MCF 10A (cell line): ENCODE measurements at regions of chr1 and their contacts with region 1.

Region 1: DNA sequence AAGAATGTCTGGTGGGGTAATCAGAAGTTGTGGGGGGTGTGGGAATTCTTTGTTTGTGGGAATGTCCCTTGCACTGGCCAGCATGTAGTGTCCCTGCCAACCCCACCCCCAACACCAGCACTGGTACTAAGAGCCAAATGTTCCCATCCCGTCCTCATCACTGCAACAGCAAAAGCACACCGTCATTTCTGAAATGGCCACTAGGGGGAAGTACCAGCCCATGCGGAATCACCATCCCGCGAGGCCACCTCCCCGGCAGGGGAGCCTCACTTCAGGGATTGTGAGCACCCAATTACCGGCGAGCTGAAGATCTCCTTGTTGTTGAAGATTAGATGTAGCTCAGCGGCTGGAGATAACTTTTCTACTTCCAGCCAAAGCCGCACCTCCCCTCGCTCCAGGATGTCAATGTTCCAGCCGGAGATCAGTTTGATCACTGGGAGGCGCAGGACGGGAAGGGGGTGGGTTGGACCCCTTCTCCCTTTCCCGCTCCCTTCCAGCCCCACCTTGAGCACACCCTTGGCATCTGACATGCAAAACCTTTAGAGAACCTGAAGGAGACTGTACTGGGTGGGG is 41.0 kb downstream of the MYOM3 start:
- DNase-seq: peak; percentile 84
- H3K4me3 Mint-ChIP-seq: no peak overlapping the region
- H3K27ac Mint-ChIP-seq: no peak overlapping the region
- H3K4me1 Mint-ChIP-seq: peaks cover 3% of the 10 kb centered on the region
- H3K27me3 Mint-ChIP-seq: no peaks in the 10 kb centered on the region
- CTCF ChIP-seq: peak; percentile 88

Region 2: DNA sequence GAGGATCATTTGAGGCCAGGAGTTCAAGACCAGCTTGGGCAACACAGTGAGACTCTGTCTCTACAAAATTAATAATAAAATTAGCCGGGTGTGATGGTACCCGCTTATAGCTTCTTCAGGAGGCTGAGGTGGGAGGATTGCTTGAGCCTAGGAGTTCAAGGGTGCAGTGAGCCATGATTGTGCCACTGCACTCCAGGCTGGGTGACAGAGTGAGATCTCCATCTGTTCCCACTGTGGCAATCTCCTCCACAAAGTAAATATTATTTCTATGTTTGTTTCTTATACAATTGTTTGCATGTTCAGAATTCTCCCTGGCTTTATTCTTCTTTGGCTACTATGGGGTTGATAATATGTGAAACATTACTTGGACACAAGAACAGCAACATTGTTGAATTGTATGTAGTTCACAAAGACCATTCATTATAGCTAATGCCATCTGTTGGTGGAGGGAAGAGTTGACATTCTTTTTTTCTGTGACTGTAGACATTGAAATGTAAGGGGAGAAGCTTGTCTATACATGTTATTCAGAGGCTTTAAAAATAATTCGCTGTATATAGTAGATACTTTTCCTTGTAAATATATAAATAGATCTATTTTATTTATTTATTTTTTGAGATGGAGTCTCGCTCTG is 43.0 kb before region 1 on chr1:
- CTCF ChIA-PET with region 1: no interaction called
- POLR2A ChIA-PET with region 1: no interaction called
- intact Hi-C with region 1: no loop called
- DNase-seq: peak; percentile 57
- H3K4me3 Mint-ChIP-seq: no peak overlapping the region
- H3K27ac Mint-ChIP-seq: peak overlapping the region; percentile 40
- H3K4me1 Mint-ChIP-seq: peaks cover 6% of the 10 kb centered on the region
- H3K27me3 Mint-ChIP-seq: no peaks in the 10 kb centered on the region
- CTCF ChIP-seq: peak; percentile 49

Region 3: GRCh38 chr1:24060118-24060881 is 10.6 kb before region 1 on chr1:
- CTCF ChIA-PET with region 1: interaction called, 12 read pairs
- POLR2A ChIA-PET with region 1: no interaction called
- intact Hi-C with region 1: no loop called
- DNase-seq: no peak
- H3K4me3 Mint-ChIP-seq: no peak overlapping the region
- H3K27ac Mint-ChIP-seq: no peak overlapping the region
- H3K4me1 Mint-ChIP-seq: no peaks in the 10 kb centered on the region
- H3K27me3 Mint-ChIP-seq: no peaks in the 10 kb centered on the region
- CTCF ChIP-seq: no peak

Region 4: DNA sequence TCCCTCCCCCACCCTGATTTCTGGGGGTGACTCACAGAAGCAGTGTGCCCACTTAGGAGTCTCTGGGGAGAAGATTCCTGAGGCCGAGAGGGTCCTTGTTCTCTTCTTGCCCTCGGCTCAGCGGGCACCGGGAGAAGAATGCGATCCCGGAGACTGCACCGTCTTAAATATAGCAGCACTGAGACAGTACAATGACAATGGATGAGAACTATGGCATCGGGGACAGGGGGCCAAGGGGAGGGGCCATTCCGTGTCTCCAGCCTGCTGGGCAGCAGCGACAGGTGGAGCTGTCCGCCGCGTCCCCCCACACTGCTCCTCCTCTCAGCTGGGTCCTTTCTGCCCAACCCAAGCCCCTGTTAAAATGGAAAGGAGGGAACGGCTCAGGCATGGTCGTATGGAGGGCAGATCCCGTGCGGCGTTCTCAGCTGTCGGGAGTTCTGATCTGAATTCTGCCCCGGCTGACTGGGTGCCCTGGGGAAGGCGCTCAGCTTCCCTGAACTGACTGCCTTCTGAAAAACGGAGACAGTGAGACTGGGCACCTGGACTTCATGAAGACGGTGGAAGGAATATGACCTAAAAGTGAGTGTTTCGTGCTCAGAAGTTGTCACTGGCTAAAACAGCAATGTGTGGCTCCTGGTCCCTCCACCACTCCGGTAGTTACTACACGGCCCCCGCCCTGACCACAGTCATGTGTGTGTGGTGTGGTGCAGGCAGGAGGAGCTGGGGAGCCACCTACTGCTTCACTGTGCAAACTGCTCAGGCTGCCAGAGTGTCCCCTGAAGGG is 41.3 kb after region 1 on chr1 and contains the start of gene MYOM3:
- CTCF ChIA-PET with region 1: interaction called, 37 read pairs
- POLR2A ChIA-PET with region 1: interaction called, 4 read pairs
- intact Hi-C with region 1: loop called (anchors 1 kb)
- DNase-seq: peak; percentile 66
- H3K4me3 Mint-ChIP-seq: no peak within 1 kb of the TSS
- H3K27ac Mint-ChIP-seq: no peak within 1 kb of the TSS
- H3K4me1 Mint-ChIP-seq: peaks cover 21% of the 10 kb centered on the region
- H3K27me3 Mint-ChIP-seq: no peaks in the 10 kb centered on the region
- CTCF ChIP-seq: peak; percentile 65
- total RNA-seq, gene MYOM3: 0.05 and 0.12 TPM in 2 replicates

Region 5: GRCh38 chr1:24635195-24635843 is 564.4 kb after region 1 on chr1:
- CTCF ChIA-PET with region 1: interaction called, 4 read pairs
- POLR2A ChIA-PET with region 1: no interaction called
- intact Hi-C with region 1: loop called (anchors 2 kb)
- DNase-seq: peak; percentile 72
- H3K4me3 Mint-ChIP-seq: no peak overlapping the region
- H3K27ac Mint-ChIP-seq: no peak overlapping the region
- H3K4me1 Mint-ChIP-seq: peaks cover 12% of the 10 kb centered on the region
- H3K27me3 Mint-ChIP-seq: peaks cover 22% of the 10 kb centered on the region
- CTCF ChIP-seq: peak; percentile 44